Activated CD4-positive, alpha-beta memory T cell treated with anti-CD3 and anti-CD28 coated beads, Interleukin-2, amount 10 ng/mL, durations not matched to agents 7 days and 5 days (primary cell): ENCODE measurements at regions of chr17 and their contacts with region 1.

Region 1: DNA sequence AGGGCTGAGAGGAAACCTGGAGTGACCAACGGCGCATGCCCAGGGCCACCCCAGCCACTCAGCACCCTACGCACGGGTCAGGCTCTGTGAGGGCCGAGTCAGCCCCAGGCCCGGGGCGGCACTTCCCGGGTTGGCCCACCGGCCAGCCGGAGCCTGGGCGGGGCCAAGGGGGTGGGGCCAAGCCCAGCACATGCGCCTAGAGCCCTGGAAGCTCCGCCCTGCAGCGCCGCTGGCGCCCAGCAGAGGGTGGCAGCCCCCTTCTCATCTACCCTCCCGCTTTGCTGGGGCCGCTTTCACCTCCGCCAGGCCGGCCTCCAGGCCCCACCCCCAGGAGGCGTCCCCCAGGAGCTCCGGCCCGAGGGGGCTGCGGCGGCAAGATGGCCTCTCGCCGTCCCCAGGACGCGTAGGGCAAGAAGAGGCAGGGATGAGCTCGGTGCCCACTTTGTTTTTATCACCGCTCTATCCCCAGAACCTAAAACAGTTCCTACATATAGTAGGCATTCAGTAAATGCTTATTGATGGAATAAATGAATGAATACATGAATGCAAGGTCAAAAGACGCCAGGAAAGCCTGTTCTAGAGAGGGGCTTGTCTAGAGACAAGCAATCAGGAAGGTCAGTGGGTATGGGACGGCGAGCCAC is 31.3 kb downstream of the MYO18A start:
- DNase-seq: peak; percentile 94
- H3K4me3 Mint-ChIP-seq: peak overlapping the region; percentile 65
- H3K27ac Mint-ChIP-seq: peak overlapping the region; percentile 68
- H3K4me1 Mint-ChIP-seq: peaks cover 55% of the 10 kb centered on the region
- H3K27me3 Mint-ChIP-seq: no peaks in the 10 kb centered on the region

Region 2: GRCh38 chr17:29124117-29124924 is 24.6 kb before region 1 on chr17:
- CTCF ChIA-PET with region 1: interaction called, 286 read pairs
- POLR2A ChIA-PET with region 1: interaction called, 28 read pairs
- DNase-seq: peak; percentile 53
- H3K4me3 Mint-ChIP-seq: no peak overlapping the region
- H3K27ac Mint-ChIP-seq: no peak overlapping the region
- H3K4me1 Mint-ChIP-seq: peaks cover 8% of the 10 kb centered on the region
- H3K27me3 Mint-ChIP-seq: no peaks in the 10 kb centered on the region

Region 3: GRCh38 chr17:29162738-29163341 is 13.9 kb after region 1 on chr17:
- CTCF ChIA-PET with region 1: interaction called, 20 read pairs
- POLR2A ChIA-PET with region 1: interaction called, 4 read pairs
- DNase-seq: no peak
- H3K4me3 Mint-ChIP-seq: no peak overlapping the region
- H3K27ac Mint-ChIP-seq: no peak overlapping the region
- H3K4me1 Mint-ChIP-seq: peaks cover 17% of the 10 kb centered on the region
- H3K27me3 Mint-ChIP-seq: no peaks in the 10 kb centered on the region

Region 4: GRCh38 chr17:29241015-29241963 is 92.4 kb after region 1 on chr17:
- CTCF ChIA-PET with region 1: interaction called, 10 read pairs
- POLR2A ChIA-PET with region 1: no interaction called
- DNase-seq: no peak
- H3K4me3 Mint-ChIP-seq: no peak overlapping the region
- H3K27ac Mint-ChIP-seq: peak overlapping the region; percentile 8
- H3K4me1 Mint-ChIP-seq: peaks cover 17% of the 10 kb centered on the region
- H3K27me3 Mint-ChIP-seq: no peaks in the 10 kb centered on the region